ENCODE measurements at regions of chr11 and their contacts with region 1.

Region 1: GRCh38 chr11:66466225-66467027 is at the start of gene PELI3:
- DNase-seq: peak; percentile 97
- H3K4me3 ChIP-seq: peak within 1 kb of the TSS; percentile 66
- H3K4me3 Mint-ChIP-seq: peak within 1 kb of the TSS; percentile 90
- H3K27ac Mint-ChIP-seq: peak within 1 kb of the TSS; percentile 62
- H3K4me1 ChIP-seq: peaks cover 19% of the 10 kb centered on the region
- H3K4me1 Mint-ChIP-seq: peaks cover 17% of the 10 kb centered on the region
- H3K27me3 ChIP-seq: no peaks in the 10 kb centered on the region; the same call in 1 of the 2 replicates
- H3K27me3 Mint-ChIP-seq: no peaks in the 10 kb centered on the region
- CTCF ChIP-seq: no peak
- total RNA-seq, gene PELI3: 21.0 and 21.1 TPM in 2 replicates

Region 2: DNA sequence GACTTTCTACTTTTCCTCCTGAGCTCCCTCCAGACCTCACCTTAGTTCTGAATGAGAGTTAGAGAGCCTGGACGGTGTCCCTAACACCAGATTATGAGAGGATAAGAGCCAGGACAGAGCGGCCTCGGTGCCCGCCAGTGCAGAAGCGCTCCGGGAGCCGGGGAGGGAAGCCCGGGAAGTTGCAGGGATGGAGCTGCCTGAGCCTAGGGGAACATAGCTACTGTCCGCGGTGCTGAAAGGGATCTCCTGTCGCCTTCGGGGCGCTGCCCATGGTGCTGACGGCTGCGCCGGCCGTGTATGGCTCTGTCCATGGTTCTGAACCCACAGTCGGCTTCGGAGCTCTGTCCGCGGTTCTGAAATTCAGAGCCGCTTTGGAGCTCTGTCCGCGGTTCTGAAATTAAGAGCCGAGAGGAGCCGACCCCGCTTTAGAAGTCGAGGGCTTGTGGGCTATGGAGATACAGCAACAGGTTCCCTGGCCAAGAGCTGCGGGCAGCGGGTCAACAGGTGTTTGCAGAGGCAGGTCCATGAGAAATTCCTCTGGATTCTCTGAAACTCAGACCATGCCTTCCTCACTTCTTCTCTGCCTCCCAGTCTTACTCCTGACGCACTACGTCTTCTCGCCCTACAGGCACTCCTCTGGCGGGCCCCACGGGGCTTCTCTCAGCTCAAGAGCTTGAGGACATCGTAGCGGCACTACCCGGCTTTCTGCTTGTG is 44.8 kb before region 1 on chr11:
- CTCF ChIA-PET with region 1: interaction called, 24 read pairs
- POLR2A ChIA-PET with region 1: interaction called, 16 read pairs
- intact Hi-C with region 1: loop called (anchors 1 kb)
- DNase-seq: peak; percentile 92 to 96
- H3K4me3 ChIP-seq: no peak overlapping the region
- H3K4me3 Mint-ChIP-seq: no peak overlapping the region
- H3K27ac Mint-ChIP-seq: no peak overlapping the region
- H3K4me1 ChIP-seq: no peaks in the 10 kb centered on the region
- H3K4me1 Mint-ChIP-seq: peaks cover 14% of the 10 kb centered on the region
- H3K27me3 ChIP-seq: no peaks in the 10 kb centered on the region; the same call in 1 of the 2 replicates
- H3K27me3 Mint-ChIP-seq: peaks cover 9% of the 10 kb centered on the region
- CTCF ChIP-seq: no peak

Region 3: GRCh38 chr11:66438504-66439466 is 27.6 kb before region 1 on chr11 and contains the start of gene MRPL11:
- CTCF ChIA-PET with region 1: interaction called, 65 read pairs
- POLR2A ChIA-PET with region 1: interaction called, 57 read pairs
- intact Hi-C with region 1: loop called (anchors 1 kb)
- DNase-seq: peak; percentile 97 to 98
- H3K4me3 ChIP-seq: peak within 1 kb of the TSS; percentile 81
- H3K4me3 Mint-ChIP-seq: peak within 1 kb of the TSS; percentile 100
- H3K27ac Mint-ChIP-seq: peak within 1 kb of the TSS; percentile 100
- H3K4me1 ChIP-seq: peaks cover 17% of the 10 kb centered on the region
- H3K4me1 Mint-ChIP-seq: peaks cover 27% of the 10 kb centered on the region
- H3K27me3 ChIP-seq: no peaks in the 10 kb centered on the region
- H3K27me3 Mint-ChIP-seq: no peaks in the 10 kb centered on the region
- CTCF ChIP-seq: peak; percentile 79 to 96
- total RNA-seq, gene MRPL11: 201 and 206 TPM in 2 replicates

Region 4: DNA sequence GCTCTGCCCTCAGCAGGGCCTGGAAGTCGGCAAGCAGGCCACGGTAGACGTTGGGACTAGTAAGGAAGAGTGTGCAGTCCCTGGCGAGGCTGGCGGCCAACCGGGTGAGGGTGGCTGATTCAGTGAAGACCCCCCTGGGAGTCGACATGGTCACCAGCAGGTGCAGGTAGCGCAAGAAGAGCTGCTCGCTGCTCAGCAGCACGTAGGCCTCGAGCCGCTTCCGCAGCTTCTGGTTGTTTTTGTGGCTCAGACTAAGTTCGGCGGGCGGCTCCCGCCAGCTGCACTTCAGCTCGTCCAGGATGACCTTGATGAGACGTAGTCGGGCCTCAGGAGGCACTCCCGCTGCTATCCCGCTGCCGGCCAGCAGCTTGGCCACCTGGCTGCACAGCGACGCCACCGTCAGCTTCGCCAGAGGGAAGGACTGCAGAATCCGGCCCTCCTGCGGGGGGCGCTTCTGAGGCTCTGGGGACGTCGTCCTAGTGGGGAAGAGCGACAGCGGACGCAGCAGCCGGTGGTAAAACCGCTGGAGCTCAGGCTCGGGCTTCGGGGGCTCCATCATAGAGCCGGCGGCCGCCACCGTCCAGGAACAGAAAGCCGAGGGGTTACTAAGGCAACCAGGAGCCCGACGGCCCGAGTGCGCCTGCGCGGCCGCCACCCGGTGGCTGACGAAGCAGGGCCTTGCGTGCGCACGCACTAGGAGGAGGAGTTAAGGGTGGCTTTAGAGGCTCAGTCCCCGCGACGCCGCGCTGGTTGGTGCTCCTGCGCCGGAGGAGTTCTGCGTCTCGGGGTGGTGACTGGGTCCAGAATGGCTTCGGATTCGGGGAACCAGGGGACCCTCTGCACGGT is 126.3 kb after region 1 on chr11 and contains the starts of genes CCDC87 and CCS:
- CTCF ChIA-PET with region 1: interaction called, 10 read pairs
- POLR2A ChIA-PET with region 1: interaction called, 9 read pairs
- intact Hi-C with region 1: no loop called
- DNase-seq: peak; percentile 99 to 100
- H3K4me3 ChIP-seq: peak within 1 kb of the TSS; percentile 68
- H3K4me3 Mint-ChIP-seq: peak within 1 kb of the TSS; percentile 79
- H3K27ac Mint-ChIP-seq: peak within 1 kb of the TSS; percentile 90
- H3K4me1 ChIP-seq: peaks cover 23% of the 10 kb centered on the region
- H3K4me1 Mint-ChIP-seq: peaks cover 6% of the 10 kb centered on the region
- H3K27me3 ChIP-seq: no peaks in the 10 kb centered on the region
- H3K27me3 Mint-ChIP-seq: no peaks in the 10 kb centered on the region
- CTCF ChIP-seq: peak; percentile 93 to 99
- total RNA-seq, gene CCDC87: 1.0 TPM in 2 replicates
- total RNA-seq, gene CCS: 52.9 and 54.0 TPM in 2 replicates

Region 5: GRCh38 chr11:66616379-66617154 is 150.1 kb after region 1 on chr11 and contains the start of gene RBM14:
- CTCF ChIA-PET with region 1: no interaction called
- POLR2A ChIA-PET with region 1: interaction called, 16 read pairs
- intact Hi-C with region 1: no loop called
- DNase-seq: peak; percentile 100
- H3K4me3 ChIP-seq: peak within 1 kb of the TSS; percentile 57
- H3K4me3 Mint-ChIP-seq: peak within 1 kb of the TSS; percentile 94
- H3K27ac Mint-ChIP-seq: peak within 1 kb of the TSS; percentile 99
- H3K4me1 ChIP-seq: peaks cover 17% of the 10 kb centered on the region
- H3K4me1 Mint-ChIP-seq: peaks cover 25% of the 10 kb centered on the region
- H3K27me3 ChIP-seq: no peaks in the 10 kb centered on the region
- H3K27me3 Mint-ChIP-seq: no peaks in the 10 kb centered on the region
- CTCF ChIP-seq: no peak
- total RNA-seq, gene RBM14: 160 and 173 TPM in 2 replicates

Region 6: DNA sequence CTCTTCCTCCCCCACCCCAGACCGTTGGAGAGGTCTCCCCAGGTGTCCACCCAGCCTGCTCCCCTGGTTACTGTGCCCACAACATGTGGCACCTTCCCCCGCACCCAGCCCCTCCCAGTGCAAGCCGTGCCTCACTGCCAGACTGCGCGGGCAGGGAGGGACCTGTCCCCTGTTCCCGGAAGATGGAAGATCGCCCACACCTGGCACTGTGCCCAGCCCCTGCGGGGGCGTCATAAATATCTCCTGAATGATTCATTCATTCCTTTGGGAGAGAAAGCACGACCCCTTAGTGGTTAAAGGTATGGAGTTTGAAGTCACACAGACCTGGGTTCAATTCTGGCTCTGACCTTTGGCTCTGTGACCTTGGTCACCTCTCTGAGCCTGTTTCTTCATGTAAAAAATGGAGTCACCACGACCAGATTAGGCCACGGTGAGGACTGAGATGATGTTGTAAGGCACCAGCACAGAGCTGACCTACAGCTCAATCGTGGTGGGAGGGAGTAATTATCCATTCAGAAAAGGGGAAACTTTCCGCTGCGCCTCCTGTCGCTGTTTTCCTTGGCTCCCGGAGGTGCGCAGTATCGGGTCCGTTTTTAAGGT is 556.0 kb after region 1 on chr11:
- CTCF ChIA-PET with region 1: interaction called, 10 read pairs
- POLR2A ChIA-PET with region 1: no interaction called
- intact Hi-C with region 1: no loop called
- DNase-seq: no peak
- H3K4me3 ChIP-seq: peak overlapping the region; percentile 50
- H3K4me3 Mint-ChIP-seq: peak overlapping the region; percentile 76
- H3K27ac Mint-ChIP-seq: no peak overlapping the region
- H3K4me1 ChIP-seq: peaks cover 14% of the 10 kb centered on the region
- H3K4me1 Mint-ChIP-seq: peaks cover 7% of the 10 kb centered on the region
- H3K27me3 ChIP-seq: peaks cover 14% of the 10 kb centered on the region
- H3K27me3 Mint-ChIP-seq: peaks cover 12% of the 10 kb centered on the region
- CTCF ChIP-seq: no peak

Measured in Caco-2 (cell line).